ENCODE measurements at regions of chr13 and their contacts with region 1.

Region 1: DNA sequence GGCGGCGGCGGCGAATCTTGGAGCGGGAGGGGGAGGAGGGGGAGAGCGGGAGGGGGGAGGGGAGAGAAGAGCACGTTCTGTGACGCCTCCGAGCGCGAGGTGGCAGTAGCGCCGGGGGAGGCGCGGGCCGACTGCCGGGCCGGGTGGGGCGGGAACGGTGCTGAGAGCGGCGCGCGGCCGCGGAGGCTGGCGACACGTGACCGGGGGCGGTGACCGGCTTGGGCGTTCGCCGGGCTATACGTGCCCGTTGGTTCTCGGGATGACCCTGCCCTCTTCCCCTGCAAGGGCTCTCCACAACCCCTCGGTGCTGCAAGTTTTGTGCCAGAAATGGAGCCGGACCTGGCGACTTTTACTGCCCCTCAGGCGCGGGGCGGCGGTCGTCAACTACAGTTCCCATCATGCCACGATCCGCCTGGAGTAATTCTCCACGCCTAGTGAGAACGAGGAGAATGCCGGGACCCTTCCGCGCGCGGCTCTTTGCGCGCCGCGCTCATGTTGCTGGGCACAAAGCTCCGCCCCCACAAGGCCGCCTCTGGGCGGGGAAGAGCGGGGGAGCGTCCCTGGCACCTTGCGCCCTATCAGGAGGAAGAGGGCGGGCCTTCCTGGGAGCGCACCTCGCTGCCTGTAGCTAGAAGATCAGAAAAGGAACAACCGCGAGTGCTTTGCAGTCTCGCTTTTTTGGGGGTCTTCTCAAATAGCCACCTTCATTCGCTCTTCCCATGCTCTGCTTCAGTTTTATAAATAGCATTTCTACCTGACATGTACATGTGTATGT is at the start of gene KPNA3:
- DNase-seq: peak; percentile 86 to 97 (median 95)
- ATAC-seq: peak; percentile 93
- H3K4me3 ChIP-seq: peak within 1 kb of the TSS; percentile 96
- H3K4me3 Mint-ChIP-seq: peak within 1 kb of the TSS; percentile 87 to 99 (median 96)
- H3K27ac ChIP-seq: peak within 1 kb of the TSS; percentile 80
- H3K27ac Mint-ChIP-seq: peak within 1 kb of the TSS; percentile 91 to 98 (median 96)
- H3K4me1 ChIP-seq: peaks cover 19 to 23% of the 10 kb centered on the region in 2 donors
- H3K4me1 Mint-ChIP-seq: peaks cover 19 to 42% (median 31%) of the 10 kb centered on the region in 7 donors
- H3K27me3 ChIP-seq: no peaks in the 10 kb centered on the region
- H3K27me3 Mint-ChIP-seq: peaks cover 2 to 8% (median 3%) of the 10 kb centered on the region in 5 donors
- total RNA-seq, gene KPNA3: 17.0 to 38.7 (median 19.6) TPM

Region 2: DNA sequence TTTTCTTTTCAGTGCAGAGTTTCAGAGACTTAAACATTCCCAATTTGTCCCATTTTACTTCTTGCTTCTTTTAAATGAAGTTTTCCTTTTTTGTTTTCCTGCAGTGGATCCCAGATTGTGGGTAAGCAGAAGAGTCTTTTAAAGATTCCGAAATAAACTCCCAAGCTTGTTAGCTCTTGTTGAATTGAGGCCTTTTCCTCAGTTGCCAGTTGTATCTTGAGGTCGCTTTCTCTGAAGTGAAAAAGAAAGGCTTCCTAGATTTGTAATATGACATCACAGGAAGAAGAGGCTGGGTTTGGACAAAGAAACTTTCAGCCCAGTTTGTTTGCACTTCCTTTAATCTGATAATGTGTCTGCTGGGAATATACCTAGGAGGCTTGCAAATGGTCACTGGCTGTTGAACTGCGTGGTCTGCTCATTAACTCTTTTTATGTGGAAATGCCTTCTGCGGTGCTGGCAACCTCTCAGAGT is 1379.8 kb before region 1 on chr13 and contains the start of gene LPAR6:
- CTCF ChIA-PET with region 1: no interaction called
- POLR2A ChIA-PET with region 1: no interaction called
- intact Hi-C with region 1: loop called in 1 of 2 experiments (anchors 5 kb)
- DNase-seq: peak in 7 of 9 donors; percentile 30 to 55 (median 47)
- ATAC-seq: peak; percentile 67
- H3K4me3 ChIP-seq: peak within 1 kb of the TSS; percentile 73
- H3K4me3 Mint-ChIP-seq: peak within 1 kb of the TSS; percentile 86 to 100 (median 98)
- H3K27ac ChIP-seq: peak within 1 kb of the TSS; percentile 90
- H3K27ac Mint-ChIP-seq: peak within 1 kb of the TSS; percentile 92 to 100 (median 94)
- H3K4me1 ChIP-seq: peaks cover 9 to 19% of the 10 kb centered on the region in 2 donors
- H3K4me1 Mint-ChIP-seq: peaks cover 19 to 47% (median 40%) of the 10 kb centered on the region in 7 donors
- H3K27me3 ChIP-seq: no peaks in the 10 kb centered on the region
- H3K27me3 Mint-ChIP-seq: no peaks in the 10 kb centered on the region
- total RNA-seq, gene LPAR6: 24.1 to 60.4 (median 32.8) TPM

Region 3: DNA sequence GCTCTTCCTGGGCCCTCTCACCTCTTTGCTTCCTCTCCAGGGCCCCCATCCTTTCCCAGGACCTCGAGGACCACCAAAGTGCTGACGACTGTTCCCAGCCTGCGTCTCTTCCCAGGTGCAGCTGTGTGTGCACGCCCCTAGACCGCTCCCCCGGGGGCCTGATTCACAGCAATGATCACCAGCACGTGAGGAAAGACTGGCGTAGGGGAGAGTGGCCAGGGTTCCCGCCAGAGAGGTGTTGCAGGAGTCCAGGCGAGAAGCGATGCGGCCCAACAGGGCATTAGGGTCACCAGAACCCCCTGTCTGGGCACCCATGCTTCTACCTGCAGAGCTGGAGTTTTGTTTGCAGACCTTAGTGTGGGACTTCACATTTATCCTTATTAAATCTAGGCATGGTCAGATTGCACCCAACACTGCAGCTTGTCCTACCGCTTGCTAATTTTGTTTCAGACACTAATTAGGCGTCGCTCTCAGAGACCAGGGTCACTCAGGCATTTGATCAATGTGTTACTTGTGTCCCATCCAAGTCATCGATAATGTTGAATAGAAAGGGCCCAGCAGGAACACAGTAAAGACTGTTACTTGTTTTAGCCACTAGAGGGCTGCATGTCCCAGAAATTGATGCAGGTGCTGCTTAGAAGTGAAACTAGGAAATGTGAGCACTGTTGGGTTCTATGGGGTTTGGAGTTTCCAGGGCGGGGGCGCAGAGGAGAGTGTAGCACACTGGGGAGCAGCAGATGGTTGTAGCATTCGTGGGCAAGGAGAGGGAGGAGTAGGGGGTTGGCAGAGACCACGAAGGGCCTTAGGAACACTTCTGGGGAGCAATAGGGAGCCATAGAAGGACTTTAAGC is 491.8 kb before region 1 on chr13:
- CTCF ChIA-PET with region 1: no interaction called
- POLR2A ChIA-PET with region 1: no interaction called
- intact Hi-C with region 1: loop called in 1 of 2 experiments (anchors 1 kb)
- DNase-seq: peak in 8 of 9 donors; percentile 67 to 82 (median 75)
- ATAC-seq: peak; percentile 96
- H3K4me3 ChIP-seq: peak overlapping the region; percentile 67
- H3K4me3 Mint-ChIP-seq: peak overlapping the region; percentile 63 to 90 (median 80)
- H3K27ac ChIP-seq: no peak overlapping the region
- H3K27ac Mint-ChIP-seq: peak overlapping the region; percentile 16 to 82 (median 71)
- H3K4me1 ChIP-seq: no peaks in the 10 kb centered on the region
- H3K4me1 Mint-ChIP-seq: peaks cover 8 to 28% (median 14%) of the 10 kb centered on the region in 7 donors
- H3K27me3 ChIP-seq: no peaks in the 10 kb centered on the region
- H3K27me3 Mint-ChIP-seq: no peaks in the 10 kb centered on the region

Region 4: GRCh38 chr13:49669735-49670309 is 122.9 kb before region 1 on chr13:
- CTCF ChIA-PET with region 1: no interaction called
- POLR2A ChIA-PET with region 1: no interaction called
- intact Hi-C with region 1: loop called in 1 of 2 experiments (anchors 1 kb)
- DNase-seq: peak in 2 of 9 donors; percentile 21 to 37
- ATAC-seq: peak; percentile 76
- H3K4me3 ChIP-seq: no peak overlapping the region
- H3K4me3 Mint-ChIP-seq: no peak overlapping the region
- H3K27ac ChIP-seq: no peak overlapping the region
- H3K27ac Mint-ChIP-seq: no peak overlapping the region
- H3K4me1 ChIP-seq: no peaks in the 10 kb centered on the region
- H3K4me1 Mint-ChIP-seq: peaks cover 0 to 10% (median 3%) of the 10 kb centered on the region in 7 donors
- H3K27me3 ChIP-seq: no peaks in the 10 kb centered on the region
- H3K27me3 Mint-ChIP-seq: no peaks in the 10 kb centered on the region

Region 5: DNA sequence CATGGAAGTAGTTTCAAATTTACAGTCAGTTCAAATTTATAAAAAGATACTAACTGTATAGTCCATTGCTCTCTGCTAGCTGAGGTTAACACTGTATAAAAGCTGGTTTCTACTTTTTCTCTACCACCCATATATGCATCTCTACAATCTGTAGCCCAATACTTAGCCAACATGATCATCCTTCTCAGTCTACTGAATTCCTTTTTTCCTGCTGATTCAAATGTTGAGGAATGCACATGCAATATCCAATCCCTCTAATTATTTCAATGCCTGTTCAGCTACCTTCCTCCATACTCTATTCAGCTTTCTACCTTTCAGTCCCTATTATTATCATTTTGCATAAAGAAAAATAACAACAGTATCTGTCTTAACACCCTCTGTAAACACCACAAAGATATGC is 15.9 kb before region 1 on chr13:
- CTCF ChIA-PET with region 1: interaction called, 3 read pairs
- POLR2A ChIA-PET with region 1: interaction called, 7 read pairs
- intact Hi-C with region 1: loop called in 1 of 2 experiments (anchors 2 kb)
- DNase-seq: no peak
- ATAC-seq: no peak
- H3K4me3 ChIP-seq: no peak overlapping the region
- H3K4me3 Mint-ChIP-seq: no peak overlapping the region
- H3K27ac ChIP-seq: no peak overlapping the region
- H3K27ac Mint-ChIP-seq: no peak overlapping the region
- H3K4me1 ChIP-seq: peaks cover 0 to 6% of the 10 kb centered on the region in 2 donors
- H3K4me1 Mint-ChIP-seq: peaks cover 19 to 81% (median 65%) of the 10 kb centered on the region in 7 donors
- H3K27me3 ChIP-seq: no peaks in the 10 kb centered on the region
- H3K27me3 Mint-ChIP-seq: no peaks in the 10 kb centered on the region

Region 6: GRCh38 chr13:50123862-50124536 is 331.3 kb after region 1 on chr13:
- CTCF ChIA-PET with region 1: interaction called, 7 read pairs
- POLR2A ChIA-PET with region 1: interaction called, 4 read pairs
- intact Hi-C with region 1: loop called (anchors 1 kb)
- DNase-seq: peak in 7 of 9 donors; percentile 46 to 88 (median 64)
- ATAC-seq: peak; percentile 82
- H3K4me3 ChIP-seq: peak overlapping the region; percentile 52
- H3K4me3 Mint-ChIP-seq: peak overlapping the region; percentile 86 to 96 (median 93)
- H3K27ac ChIP-seq: peak overlapping the region; percentile 95
- H3K27ac Mint-ChIP-seq: peak overlapping the region; percentile 90 to 99 (median 97)
- H3K4me1 ChIP-seq: peaks cover 24 to 29% of the 10 kb centered on the region in 2 donors
- H3K4me1 Mint-ChIP-seq: peaks cover 25 to 61% (median 50%) of the 10 kb centered on the region in 7 donors
- H3K27me3 ChIP-seq: peaks cover 0 to 11% of the 10 kb centered on the region in 2 donors
- H3K27me3 Mint-ChIP-seq: peaks cover 1 to 15% (median 12%) of the 10 kb centered on the region in 5 donors